Activated naive CD4-positive, alpha-beta T cell treated with anti-CD3 and anti-CD28 coated beads for 36 hours (primary cell): ENCODE measurements at regions of chr15 and their contacts with region 1.

Region 1: GRCh38 chr15:91271565-91272153 is 171.6 kb downstream of the SV2B start:
- DNase-seq: peak; percentile 77
- H3K4me3 Mint-ChIP-seq: no peak overlapping the region
- H3K27ac Mint-ChIP-seq: no peak overlapping the region
- H3K4me1 Mint-ChIP-seq: peaks cover 3% of the 10 kb centered on the region
- H3K27me3 Mint-ChIP-seq: peaks cover 5% of the 10 kb centered on the region

Region 2: DNA sequence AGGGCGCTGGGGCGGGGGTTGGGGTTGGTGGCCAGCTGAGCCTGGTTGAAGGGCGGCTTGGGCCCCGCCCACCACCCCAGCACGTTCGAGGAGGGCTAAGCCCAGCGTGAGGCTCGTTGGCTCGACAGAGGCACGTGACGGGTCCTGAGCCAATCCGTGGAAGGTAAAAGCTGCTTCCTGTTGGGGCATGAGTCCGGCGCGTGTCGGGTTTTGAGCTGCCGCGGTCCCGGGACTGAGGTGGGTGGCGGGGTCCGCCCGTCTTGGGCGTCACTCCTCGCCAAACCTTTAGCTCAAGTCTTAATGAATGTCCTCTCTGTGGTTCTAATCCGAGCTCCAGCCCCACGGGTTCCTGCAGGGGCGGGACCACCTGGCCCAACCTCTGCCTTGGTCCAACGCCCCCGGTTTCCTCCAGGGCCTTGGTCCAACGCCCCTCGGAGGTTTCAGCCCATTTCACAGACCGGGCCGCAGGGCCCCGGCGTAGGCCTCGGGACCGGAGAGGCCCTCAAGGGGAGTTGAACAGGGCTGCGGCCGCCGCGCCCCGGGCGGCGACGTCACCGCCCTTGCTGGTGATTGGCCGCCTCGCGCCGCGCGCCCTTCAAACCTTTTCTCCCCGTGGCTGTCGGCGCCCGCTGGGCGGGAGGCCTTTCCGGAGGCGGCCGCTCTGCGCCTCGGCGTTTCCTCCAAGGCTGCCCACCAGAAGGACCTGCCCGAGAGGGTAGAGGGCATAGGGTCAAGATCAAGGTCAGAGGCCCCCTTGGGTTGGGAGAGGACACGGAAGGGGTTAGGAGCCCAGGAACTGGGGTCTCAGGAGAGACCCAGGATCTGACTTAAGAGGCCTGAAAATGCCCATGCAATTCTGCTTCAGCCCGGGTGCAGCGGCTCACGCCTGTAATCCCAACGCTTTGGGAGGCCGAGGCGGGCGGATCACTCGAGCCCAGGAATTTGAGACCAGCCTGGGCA is 316.7 kb before region 1 on chr15 and contains the start of gene RCCD1:
- CTCF ChIA-PET with region 1: interaction called, 19 read pairs
- intact Hi-C with region 1: loop called (anchors 1 kb)
- DNase-seq: peak; percentile 95
- H3K4me3 Mint-ChIP-seq: peak within 1 kb of the TSS; percentile 86
- H3K27ac Mint-ChIP-seq: peak within 1 kb of the TSS; percentile 93
- H3K4me1 Mint-ChIP-seq: peaks cover 12% of the 10 kb centered on the region
- H3K27me3 Mint-ChIP-seq: no peaks in the 10 kb centered on the region
- total RNA-seq, gene RCCD1: 52.0 to 52.4 TPM

Region 3: GRCh38 chr15:91022075-91022835 is 249.4 kb before region 1 on chr15 and contains the start of gene VPS33B:
- CTCF ChIA-PET with region 1: interaction called, 4 read pairs
- intact Hi-C with region 1: loop called (anchors 1 kb)
- DNase-seq: peak; percentile 88
- H3K4me3 Mint-ChIP-seq: peak within 1 kb of the TSS; percentile 87
- H3K27ac Mint-ChIP-seq: peak within 1 kb of the TSS; percentile 89
- H3K4me1 Mint-ChIP-seq: peaks cover 34% of the 10 kb centered on the region
- H3K27me3 Mint-ChIP-seq: no peaks in the 10 kb centered on the region
- total RNA-seq, gene VPS33B: 19.8 to 21.2 TPM

Region 4: DNA sequence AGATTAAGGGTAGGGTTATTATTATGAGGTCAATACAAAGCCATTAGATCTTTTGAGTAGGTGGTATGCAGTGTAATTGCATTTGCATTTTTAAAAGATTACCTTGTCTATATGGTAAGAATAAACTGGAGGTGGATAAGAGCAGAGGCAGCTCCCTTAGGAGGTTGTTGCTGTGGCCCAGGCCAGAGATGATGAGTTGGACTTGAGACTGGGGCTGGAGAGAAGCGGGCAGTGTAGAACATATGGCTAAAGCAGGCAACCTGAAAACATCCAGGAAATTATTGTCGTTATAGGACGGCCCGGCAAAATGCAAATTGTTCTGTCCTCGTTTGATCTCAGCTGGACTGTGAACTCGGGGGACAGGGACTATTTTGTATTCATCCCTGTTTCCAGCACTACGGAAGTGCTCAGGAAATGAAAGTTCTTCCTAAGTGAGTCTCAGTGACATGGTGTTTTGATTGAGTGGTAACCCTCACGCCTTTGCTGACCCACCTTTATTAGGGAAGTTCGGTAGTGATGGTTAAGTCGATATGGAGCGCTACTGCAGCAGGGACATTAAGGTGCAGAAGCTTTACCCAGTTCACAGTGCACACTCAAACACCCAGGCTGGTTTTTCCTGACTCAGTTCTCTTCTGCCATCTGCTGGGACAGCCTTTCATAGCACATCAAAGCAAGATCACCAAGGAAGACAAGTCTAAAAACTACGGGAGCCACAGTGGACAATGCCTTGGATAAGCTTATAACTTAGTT is 222.1 kb before region 1 on chr15:
- CTCF ChIA-PET with region 1: interaction called, 20 read pairs
- intact Hi-C with region 1: no loop called
- DNase-seq: peak; percentile 83
- H3K4me3 Mint-ChIP-seq: no peak overlapping the region
- H3K27ac Mint-ChIP-seq: no peak overlapping the region
- H3K4me1 Mint-ChIP-seq: peaks cover 19% of the 10 kb centered on the region
- H3K27me3 Mint-ChIP-seq: no peaks in the 10 kb centered on the region

Region 5: GRCh38 chr15:91055548-91056331 is 215.9 kb before region 1 on chr15:
- CTCF ChIA-PET with region 1: interaction called, 78 read pairs
- intact Hi-C with region 1: loop called (anchors 1 kb)
- DNase-seq: peak; percentile 62
- H3K4me3 Mint-ChIP-seq: no peak overlapping the region
- H3K27ac Mint-ChIP-seq: no peak overlapping the region
- H3K4me1 Mint-ChIP-seq: no peaks in the 10 kb centered on the region
- H3K27me3 Mint-ChIP-seq: peaks cover 31% of the 10 kb centered on the region

Region 6: GRCh38 chr15:91224755-91225380 is 46.8 kb before region 1 on chr15:
- CTCF ChIA-PET with region 1: interaction called, 9 read pairs
- intact Hi-C with region 1: loop called (anchors 2 kb)
- DNase-seq: peak; percentile 9
- H3K4me3 Mint-ChIP-seq: no peak overlapping the region
- H3K27ac Mint-ChIP-seq: no peak overlapping the region
- H3K4me1 Mint-ChIP-seq: no peaks in the 10 kb centered on the region
- H3K27me3 Mint-ChIP-seq: peaks cover 29% of the 10 kb centered on the region

Region 7: DNA sequence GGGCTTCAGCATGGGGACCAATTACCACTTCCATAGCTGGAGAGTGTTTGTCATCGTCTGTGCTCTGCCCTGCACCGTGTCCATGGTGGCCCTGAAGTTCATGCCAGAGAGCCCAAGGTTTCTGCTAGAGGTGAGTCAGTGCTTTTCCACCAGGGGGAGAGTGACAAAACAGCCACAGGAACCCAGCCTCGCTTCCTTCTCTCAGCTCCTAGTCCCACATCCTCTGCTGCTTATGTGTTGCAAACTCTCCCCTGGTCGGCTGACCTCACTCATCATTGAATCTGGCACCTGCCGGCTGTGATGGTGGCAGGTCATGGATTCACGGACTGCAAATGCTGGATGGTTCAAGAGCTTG is 13.3 kb before region 1 on chr15:
- CTCF ChIA-PET with region 1: interaction called, 16 read pairs
- intact Hi-C with region 1: no loop called
- DNase-seq: peak; percentile 10
- H3K4me3 Mint-ChIP-seq: no peak overlapping the region
- H3K27ac Mint-ChIP-seq: no peak overlapping the region
- H3K4me1 Mint-ChIP-seq: no peaks in the 10 kb centered on the region
- H3K27me3 Mint-ChIP-seq: peaks cover 3% of the 10 kb centered on the region